ENCODE measurements at regions of chr6 and their contacts with region 1.

Region 1: DNA sequence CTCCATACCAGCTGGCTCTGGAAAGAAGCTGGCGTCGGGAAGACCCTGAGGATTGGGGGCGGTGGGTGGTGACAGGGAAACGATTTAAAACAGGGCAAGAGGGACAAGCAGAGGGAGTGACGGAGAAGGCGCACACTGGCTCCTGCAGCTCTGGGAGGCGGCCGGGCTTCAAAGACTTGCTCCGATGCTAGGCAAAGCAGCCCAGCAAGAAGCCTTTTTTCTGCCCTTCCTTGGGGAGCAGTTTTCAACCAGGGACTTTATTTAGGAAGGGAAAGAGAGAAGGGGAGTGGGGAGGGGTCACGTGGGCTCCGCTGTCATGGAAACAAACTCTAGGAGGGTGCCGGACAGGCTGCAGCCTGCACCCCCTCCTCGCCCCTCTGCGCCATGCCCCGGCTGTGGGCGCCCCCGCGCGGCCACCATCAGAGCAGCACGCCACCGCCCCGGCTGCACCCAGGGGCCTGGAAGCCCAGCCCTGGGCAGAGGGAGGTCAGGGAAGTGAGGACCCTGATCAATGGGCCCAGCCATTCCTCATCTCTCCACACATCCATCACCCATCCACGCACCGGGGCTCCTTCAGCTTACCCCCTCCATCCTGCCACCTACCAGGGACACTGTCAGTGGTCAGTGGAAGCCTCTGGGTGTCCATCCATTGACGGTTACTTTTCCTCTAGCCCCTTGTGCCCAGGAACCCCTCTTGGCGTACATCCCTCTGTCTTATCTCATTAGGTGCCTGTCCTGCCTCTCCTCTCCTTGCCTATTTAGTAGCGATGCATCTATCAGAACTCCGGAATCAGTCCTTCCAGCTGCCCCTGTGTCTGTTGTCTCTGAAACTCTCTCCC is 66.6 kb upstream of the CCDC167 start:
- DNase-seq: peak; percentile 94
- H3K4me3 ChIP-seq: peak overlapping the region; percentile 42 to 54
- H3K27ac ChIP-seq: peak overlapping the region in 1 of 2 experiments; percentile 91; a peak in 2 of 4 replicates
- H3K4me1 ChIP-seq: peaks cover 0 to 52% of the 10 kb centered on the region in 2 experiments; a peak in 2 of 4 replicates
- H3K27me3 ChIP-seq: peaks cover 4% of the 10 kb centered on the region
- CTCF ChIP-seq: peak; percentile 87
- EP300 ChIP-seq: no peak
- RAD21 ChIP-seq: peak; percentile 84

Region 2: DNA sequence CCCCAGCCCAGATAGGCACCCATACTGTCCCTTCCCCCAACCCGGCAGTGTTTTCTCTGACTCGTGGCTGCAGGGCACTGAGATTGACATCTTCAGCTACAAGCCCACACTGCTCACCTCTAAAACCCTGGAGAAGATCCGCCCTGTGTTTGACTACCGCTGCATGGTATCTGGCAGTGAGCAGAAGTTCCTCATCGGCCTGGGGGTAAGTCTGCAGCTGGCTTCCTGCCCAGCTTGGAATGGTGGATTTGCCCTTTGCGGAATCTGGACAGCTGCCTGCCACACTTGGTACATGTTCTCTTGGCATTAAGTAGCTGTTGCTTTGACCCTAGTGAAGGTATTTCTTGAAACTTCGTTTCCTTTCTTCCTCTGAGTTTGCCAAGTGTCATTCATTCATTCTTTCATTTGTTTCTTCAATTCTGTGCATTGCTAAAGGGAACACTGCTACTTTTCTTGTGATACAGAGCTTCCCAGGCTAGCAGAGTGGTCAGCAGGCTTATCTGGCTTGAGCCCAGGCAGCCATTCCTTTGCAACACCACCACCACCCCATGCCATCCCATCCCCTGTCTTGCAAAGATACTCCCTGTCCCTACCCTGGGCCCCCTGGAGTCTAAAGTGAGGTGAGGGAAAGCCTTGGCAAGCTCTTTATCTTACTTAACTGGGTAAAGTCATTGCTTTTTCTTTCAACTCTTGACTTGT is 92.8 kb before region 1 on chr6:
- CTCF ChIA-PET with region 1: interaction called, 12 read pairs
- POLR2A ChIA-PET with region 1: no interaction called
- DNase-seq: peak; percentile 84
- H3K4me3 ChIP-seq: no peak overlapping the region
- H3K27ac ChIP-seq: peak overlapping the region in 1 of 2 experiments; percentile 88; a peak in 3 of 4 replicates
- H3K4me1 ChIP-seq: peaks cover 7 to 32% of the 10 kb centered on the region in 2 experiments; a peak in 3 of 4 replicates
- H3K27me3 ChIP-seq: no peaks in the 10 kb centered on the region
- CTCF ChIP-seq: no peak
- EP300 ChIP-seq: peak; percentile 23 to 85; a peak in 3 of 4 replicates
- RAD21 ChIP-seq: peak; percentile 35

Region 3: GRCh38 chr6:37489660-37490361 is 76.5 kb before region 1 on chr6:
- CTCF ChIA-PET with region 1: interaction called, 116 read pairs
- POLR2A ChIA-PET with region 1: interaction called, 16 read pairs
- DNase-seq: peak; percentile 68
- H3K4me3 ChIP-seq: no peak overlapping the region
- H3K27ac ChIP-seq: peak overlapping the region in 1 of 2 experiments; percentile 99; a peak in 2 of 4 replicates
- H3K4me1 ChIP-seq: peaks cover 0 to 72% of the 10 kb centered on the region in 2 experiments; a peak in 2 of 4 replicates
- H3K27me3 ChIP-seq: no peaks in the 10 kb centered on the region
- CTCF ChIP-seq: peak; percentile 34
- EP300 ChIP-seq: peak in 1 of 2 experiments; percentile 12; a peak in 1 of 4 replicates
- RAD21 ChIP-seq: no peak; the same call in 1 of the 2 replicates

Region 4: DNA sequence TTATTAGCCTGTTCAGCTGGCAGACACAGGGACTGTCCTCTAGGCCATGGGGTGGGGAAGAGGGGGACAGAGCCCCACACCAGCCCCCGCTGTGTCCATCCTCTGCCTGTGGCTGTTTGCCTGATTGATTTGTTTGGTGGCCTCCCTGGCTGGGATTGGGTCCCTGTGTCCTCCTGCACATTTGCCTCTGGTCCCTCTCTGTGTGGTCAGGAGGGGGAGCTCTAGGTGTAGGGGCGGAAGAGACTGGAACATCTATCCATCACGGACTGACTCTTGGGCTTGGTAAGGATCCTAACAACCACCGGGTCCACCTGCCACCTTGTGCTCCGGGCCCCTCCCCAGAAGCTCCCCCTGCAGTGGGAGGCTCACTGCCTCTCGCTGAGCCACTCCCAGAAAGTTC is 28.2 kb before region 1 on chr6:
- CTCF ChIA-PET with region 1: interaction called, 63 read pairs
- POLR2A ChIA-PET with region 1: interaction called, 3 read pairs
- DNase-seq: no peak
- H3K4me3 ChIP-seq: no peak overlapping the region
- H3K27ac ChIP-seq: no peak overlapping the region
- H3K4me1 ChIP-seq: peaks cover 0 to 24% of the 10 kb centered on the region in 2 experiments; a peak in 1 of 4 replicates
- H3K27me3 ChIP-seq: peaks cover 28% of the 10 kb centered on the region; the same call in 1 of the 2 replicates
- CTCF ChIP-seq: peak; percentile 34
- EP300 ChIP-seq: no peak
- RAD21 ChIP-seq: peak; percentile 52

Region 5: GRCh38 chr6:37554480-37554819 is 11.9 kb before region 1 on chr6:
- CTCF ChIA-PET with region 1: interaction called, 16 read pairs
- POLR2A ChIA-PET with region 1: no interaction called
- DNase-seq: no peak
- H3K4me3 ChIP-seq: no peak overlapping the region
- H3K27ac ChIP-seq: peak overlapping the region in 1 of 2 experiments; percentile 29; a peak in 1 of 4 replicates
- H3K4me1 ChIP-seq: peaks cover 11 to 19% of the 10 kb centered on the region in 2 experiments
- H3K27me3 ChIP-seq: no peaks in the 10 kb centered on the region
- CTCF ChIP-seq: no peak
- EP300 ChIP-seq: no peak
- RAD21 ChIP-seq: no peak

Region 6: DNA sequence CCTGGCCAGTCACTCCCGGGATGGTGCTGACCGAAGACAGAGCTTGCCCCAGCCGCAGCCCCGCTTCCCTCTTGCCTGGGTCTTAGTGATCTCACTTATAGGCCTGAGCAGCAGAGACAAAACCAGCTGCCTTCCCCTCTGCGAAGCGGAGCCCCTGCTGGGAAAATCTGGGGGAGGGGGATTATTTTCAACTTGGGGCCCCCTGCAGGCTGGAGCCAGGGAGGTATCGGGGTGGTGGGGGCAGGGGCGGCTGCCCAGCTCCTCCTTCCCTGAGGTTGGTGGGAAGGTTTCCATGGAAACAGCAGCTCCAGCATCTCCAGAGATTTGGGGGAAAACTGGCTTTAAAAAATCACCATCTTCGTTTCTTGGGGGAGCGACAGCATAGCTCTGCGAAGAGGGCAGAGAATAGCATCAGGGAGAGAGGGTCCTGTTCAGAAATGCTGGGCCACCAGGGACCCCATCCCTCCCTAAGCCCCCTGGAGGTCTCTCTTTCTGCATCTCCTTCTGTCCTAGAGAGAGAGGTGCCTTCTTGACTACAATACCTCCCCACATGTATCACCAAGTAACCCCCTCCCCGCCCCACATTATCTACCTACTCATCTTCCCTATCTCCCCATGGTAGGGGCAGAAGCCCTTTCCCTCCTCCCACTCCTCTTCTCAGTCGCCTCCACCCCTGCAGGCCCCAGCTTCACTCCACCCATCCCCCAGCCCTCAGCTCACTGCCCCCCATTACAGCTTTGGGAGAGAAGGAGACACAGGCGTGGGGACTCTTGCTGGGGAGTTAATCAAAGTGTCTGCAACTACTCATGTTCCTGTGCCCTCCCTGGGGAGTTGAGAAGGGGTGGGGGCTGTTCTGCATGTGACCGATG is 21.8 kb after region 1 on chr6:
- CTCF ChIA-PET with region 1: interaction called, 25 read pairs
- POLR2A ChIA-PET with region 1: interaction called, 3 read pairs
- DNase-seq: no peak
- H3K4me3 ChIP-seq: no peak overlapping the region
- H3K27ac ChIP-seq: no peak overlapping the region
- H3K4me1 ChIP-seq: peaks cover 0 to 5% of the 10 kb centered on the region in 2 experiments; a peak in 1 of 4 replicates
- H3K27me3 ChIP-seq: no peaks in the 10 kb centered on the region
- CTCF ChIP-seq: no peak
- EP300 ChIP-seq: no peak
- RAD21 ChIP-seq: no peak